Activated CD4-positive, alpha-beta T cell treated with anti-CD3 and anti-CD28 coated beads, Interleukin-2, amount 10 ng/mL, durations not matched to agents 7 days and 5 days (primary cell): ENCODE measurements at regions of chrX and their contacts with region 1.

Region 1: GRCh38 chrX:130024127-130024526 is 41.7 kb downstream of the BCORL1 start:
- DNase-seq: peak; percentile 85
- H3K4me3 Mint-ChIP-seq: peak overlapping the region; percentile 22
- H3K27ac Mint-ChIP-seq: peak overlapping the region; percentile 79
- H3K4me1 Mint-ChIP-seq: peaks cover 18% of the 10 kb centered on the region
- H3K27me3 Mint-ChIP-seq: no peaks in the 10 kb centered on the region

Region 2: GRCh38 chrX:129925305-129926092 is 98.6 kb before region 1 on chrX:
- CTCF ChIA-PET with region 1: interaction called, 19 read pairs
- POLR2A ChIA-PET with region 1: no interaction called
- DNase-seq: peak; percentile 79
- H3K4me3 Mint-ChIP-seq: no peak overlapping the region
- H3K27ac Mint-ChIP-seq: peak overlapping the region; percentile 36
- H3K4me1 Mint-ChIP-seq: peaks cover 6% of the 10 kb centered on the region
- H3K27me3 Mint-ChIP-seq: no peaks in the 10 kb centered on the region

Region 3: GRCh38 chrX:130186651-130187050 is 162.5 kb after region 1 on chrX:
- CTCF ChIA-PET with region 1: no interaction called
- POLR2A ChIA-PET with region 1: no interaction called
- DNase-seq: no peak
- H3K4me3 Mint-ChIP-seq: no peak overlapping the region
- H3K27ac Mint-ChIP-seq: peak overlapping the region; percentile 62
- H3K4me1 Mint-ChIP-seq: peaks cover 26% of the 10 kb centered on the region
- H3K27me3 Mint-ChIP-seq: no peaks in the 10 kb centered on the region